ENCODE measurements at regions of chr14 and their contacts with region 1.

Region 1: DNA sequence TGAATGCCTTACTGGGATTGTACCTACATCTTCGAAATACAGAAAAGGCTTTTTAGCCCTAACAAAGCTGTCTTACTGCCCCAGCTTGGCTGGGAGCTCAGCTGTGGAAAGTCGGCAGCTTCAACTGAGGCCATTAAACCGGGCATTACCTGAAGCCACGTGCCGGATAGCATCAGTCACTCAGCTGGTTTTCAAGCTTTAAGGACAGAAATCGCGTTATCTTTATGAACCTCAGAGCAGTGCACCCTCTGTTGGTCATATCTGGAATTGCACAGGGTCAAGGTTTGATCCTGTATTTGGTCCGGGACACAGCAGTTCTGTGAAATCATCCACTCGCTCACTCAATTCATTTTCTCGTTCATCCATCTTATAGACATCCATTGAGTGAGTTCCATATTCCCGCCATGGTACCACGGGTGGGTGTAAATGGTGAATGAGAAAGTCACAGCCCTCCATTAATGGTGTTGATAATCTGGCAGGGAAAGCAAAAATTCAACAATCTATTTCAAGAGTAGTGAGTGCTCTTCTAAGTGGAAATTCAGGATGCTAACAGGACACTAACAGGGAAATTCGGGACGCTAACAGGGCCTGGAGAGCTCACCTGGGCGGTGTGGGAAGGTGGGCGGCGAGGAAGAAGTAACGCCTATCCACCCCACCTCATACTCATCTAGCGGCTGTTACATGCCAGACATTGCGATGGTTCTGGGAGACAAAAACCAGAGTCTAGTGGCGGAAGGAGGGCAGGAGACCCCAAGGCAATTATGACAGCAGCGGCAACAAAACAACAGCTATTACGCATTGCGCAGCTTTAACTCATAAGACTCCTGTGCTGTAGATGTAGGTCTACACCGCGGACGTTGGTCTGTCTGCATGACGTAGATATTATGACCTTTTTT is 60.6 kb upstream of the TCL1A start:
- DNase-seq: no peak
- H3K4me3 ChIP-seq: no peak overlapping the region
- H3K27ac ChIP-seq: no peak overlapping the region
- H3K4me1 ChIP-seq: no peaks in the 10 kb centered on the region
- H3K27me3 ChIP-seq: peaks cover 0 to 15% (median 0%) of the 10 kb centered on the region in 7 donors
- CTCF ChIP-seq: peak; percentile 78 to 87 (median 83)
- POLR2A ChIP-seq: no peak

Region 2: GRCh38 chr14:95431199-95432143 is 343.0 kb before region 1 on chr14:
- intact Hi-C with region 1: no loop called
- DNase-seq: no peak
- H3K4me3 ChIP-seq: no peak overlapping the region
- H3K27ac ChIP-seq: no peak overlapping the region
- H3K4me1 ChIP-seq: peaks cover 0 to 10% (median 0%) of the 10 kb centered on the region in 6 donors
- H3K27me3 ChIP-seq: no peaks in the 10 kb centered on the region
- CTCF ChIP-seq: peak in 6 of 11 experiments; percentile 20 to 57 (median 42)
- POLR2A ChIP-seq: no peak

Region 3: GRCh38 chr14:95993768-95994592 is 219.5 kb after region 1 on chr14:
- intact Hi-C with region 1: loop called (anchors 10 kb)
- DNase-seq: no peak
- H3K4me3 ChIP-seq: no peak overlapping the region
- H3K27ac ChIP-seq: no peak overlapping the region
- H3K4me1 ChIP-seq: no peaks in the 10 kb centered on the region
- H3K27me3 ChIP-seq: peaks cover 0 to 42% (median 8%) of the 10 kb centered on the region in 7 donors
- CTCF ChIP-seq: peak; percentile 49 to 83 (median 71)
- POLR2A ChIP-seq: no peak

Region 4: DNA sequence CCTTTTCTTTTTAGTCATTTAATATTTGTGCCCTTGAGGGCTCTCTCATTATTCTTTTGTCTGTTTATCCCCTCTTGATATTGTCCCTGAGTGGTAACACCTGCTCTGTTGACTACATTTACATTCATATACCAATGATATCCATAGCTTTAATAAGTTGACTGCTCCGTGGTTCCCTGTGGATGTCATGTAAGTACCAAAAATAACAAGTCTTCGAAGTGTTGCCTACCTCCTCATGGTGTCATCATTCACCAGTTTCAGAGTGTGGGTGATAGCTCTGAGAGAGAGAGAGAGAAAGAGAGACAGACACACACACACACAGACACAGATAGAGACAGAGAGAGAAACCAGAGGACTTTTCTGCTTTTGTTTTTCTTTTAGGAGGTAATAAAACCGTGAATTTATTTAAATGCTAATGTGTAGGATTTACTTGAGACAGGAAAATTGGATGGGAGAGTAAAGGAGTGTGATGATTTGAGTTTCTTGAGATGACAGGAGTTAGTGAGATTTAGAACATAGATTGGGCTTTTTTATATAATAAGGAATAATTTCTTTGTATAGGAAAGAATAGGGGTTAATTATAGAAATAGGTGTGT is 779.9 kb after region 1 on chr14:
- intact Hi-C with region 1: no loop called
- DNase-seq: no peak
- H3K4me3 ChIP-seq: no peak overlapping the region
- H3K27ac ChIP-seq: no peak overlapping the region
- H3K4me1 ChIP-seq: peaks cover 0 to 10% (median 0%) of the 10 kb centered on the region in 6 donors
- H3K27me3 ChIP-seq: no peaks in the 10 kb centered on the region
- CTCF ChIP-seq: no peak
- POLR2A ChIP-seq: no peak

Measured in spleen (tissue), 13 donors.